Ovary (tissue), 10 donors: ENCODE measurements at regions of chr15 and their contacts with region 1.

Region 1: GRCh38 chr15:37595426-37595970 is 338.9 kb upstream of the TMCO5A start:
- DNase-seq: no peak
- H3K4me3 ChIP-seq: no peak overlapping the region
- H3K27ac ChIP-seq: no peak overlapping the region
- H3K4me1 ChIP-seq: no peaks in the 10 kb centered on the region
- H3K27me3 ChIP-seq: no peaks in the 10 kb centered on the region
- CTCF ChIP-seq: no peak
- EP300 ChIP-seq: no peak
- POLR2A ChIP-seq: no peak

Region 2: DNA sequence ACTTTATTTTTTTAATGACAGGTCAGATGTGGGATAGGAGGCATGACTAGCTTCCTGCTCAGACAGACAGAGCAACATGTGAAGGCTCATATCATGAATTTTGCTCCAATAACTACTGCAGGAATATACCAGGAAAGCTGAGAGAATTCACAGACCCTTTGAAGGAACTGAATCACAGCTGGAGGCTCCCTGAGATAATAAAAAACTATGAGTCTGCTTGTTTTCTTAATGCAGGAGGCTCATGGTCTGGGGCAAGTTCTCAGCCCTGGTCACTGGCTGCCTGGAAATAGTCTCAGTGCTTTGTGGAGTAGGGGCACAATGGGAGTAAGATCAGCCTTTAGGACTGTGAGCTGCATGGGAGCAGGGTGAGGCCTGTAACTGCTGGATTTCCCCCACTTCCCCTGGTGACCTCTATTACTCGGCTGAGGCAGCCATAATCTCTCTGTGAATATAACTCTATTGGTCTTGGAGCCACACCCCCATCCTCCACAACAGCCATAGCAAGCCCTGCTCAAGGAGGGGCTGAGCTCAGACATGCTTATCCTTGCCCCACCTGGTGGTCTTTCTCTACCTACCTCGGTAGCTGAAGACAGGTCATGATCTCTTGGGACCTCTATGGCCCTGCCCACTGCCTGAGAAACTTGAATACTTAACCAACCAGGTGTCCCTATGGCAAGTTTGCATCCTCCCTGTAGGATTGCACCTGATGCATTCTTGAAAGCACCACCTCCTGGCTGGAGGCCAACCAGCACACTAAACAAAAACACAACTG is 57.3 kb after region 1 on chr15:
- intact Hi-C with region 1: loop called in 1 of 4 experiments (anchors 5 kb)
- DNase-seq: no peak
- H3K4me3 ChIP-seq: no peak overlapping the region
- H3K27ac ChIP-seq: no peak overlapping the region
- H3K4me1 ChIP-seq: no peaks in the 10 kb centered on the region
- H3K27me3 ChIP-seq: no peaks in the 10 kb centered on the region
- CTCF ChIP-seq: no peak
- EP300 ChIP-seq: no peak
- POLR2A ChIP-seq: no peak